Activated B cell treated with CpG ODN at 0.5 μM for 24 hours (primary cell): ENCODE measurements at regions of chr16 and their contacts with region 1.

Region 1: DNA sequence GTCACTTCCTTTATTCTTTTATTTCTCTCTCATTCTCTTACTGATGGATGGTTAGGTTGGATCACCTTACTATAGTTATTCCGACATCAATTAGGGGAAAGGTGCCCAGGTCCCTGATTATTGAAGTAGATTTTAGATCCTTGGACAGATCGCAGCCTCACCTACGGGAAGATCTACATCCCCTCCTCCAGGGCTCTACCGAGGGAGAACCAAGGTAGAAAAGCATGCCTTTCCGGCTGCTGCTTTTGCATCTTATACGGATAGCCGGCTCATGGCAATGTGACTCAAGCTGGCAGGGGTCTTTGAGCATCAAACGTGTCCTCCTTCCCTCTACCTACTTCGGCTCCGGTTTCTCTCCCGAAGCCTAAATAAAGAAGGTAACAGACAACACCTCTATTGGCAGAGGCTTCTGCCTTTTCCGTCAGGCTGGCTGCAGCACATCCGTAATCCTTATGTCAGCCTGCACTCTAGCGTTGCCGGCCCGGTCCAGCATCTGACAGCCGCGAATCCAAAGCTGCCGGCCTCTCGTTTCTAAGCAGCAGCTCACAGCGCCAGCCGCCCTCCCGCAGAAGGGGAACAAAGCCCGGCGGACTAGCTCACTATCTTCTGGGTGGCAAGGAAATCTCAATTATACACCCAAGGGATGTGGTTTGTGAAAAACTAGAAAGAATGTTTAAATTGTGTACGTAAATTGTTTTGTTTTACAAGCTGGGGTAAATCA is 46.9 kb downstream of the IRX6 start:
- DNase-seq: no peak
- ATAC-seq: no peak
- H3K4me3 Mint-ChIP-seq: no peak overlapping the region
- H3K27ac Mint-ChIP-seq: no peak overlapping the region
- H3K4me1 Mint-ChIP-seq: peaks cover 9% of the 10 kb centered on the region
- H3K27me3 Mint-ChIP-seq: peaks cover 25% of the 10 kb centered on the region
- CTCF ChIP-seq: no peak

Region 2: GRCh38 chr16:55035029-55035428 is 335.9 kb before region 1 on chr16:
- CTCF ChIA-PET with region 1: no interaction called
- POLR2A ChIA-PET with region 1: no interaction called
- intact Hi-C with region 1: loop called (anchors 2 kb)
- DNase-seq: no peak
- ATAC-seq: no peak
- H3K4me3 Mint-ChIP-seq: no peak overlapping the region
- H3K27ac Mint-ChIP-seq: no peak overlapping the region
- H3K4me1 Mint-ChIP-seq: no peaks in the 10 kb centered on the region
- H3K27me3 Mint-ChIP-seq: no peaks in the 10 kb centered on the region
- CTCF ChIP-seq: no peak

Region 3: DNA sequence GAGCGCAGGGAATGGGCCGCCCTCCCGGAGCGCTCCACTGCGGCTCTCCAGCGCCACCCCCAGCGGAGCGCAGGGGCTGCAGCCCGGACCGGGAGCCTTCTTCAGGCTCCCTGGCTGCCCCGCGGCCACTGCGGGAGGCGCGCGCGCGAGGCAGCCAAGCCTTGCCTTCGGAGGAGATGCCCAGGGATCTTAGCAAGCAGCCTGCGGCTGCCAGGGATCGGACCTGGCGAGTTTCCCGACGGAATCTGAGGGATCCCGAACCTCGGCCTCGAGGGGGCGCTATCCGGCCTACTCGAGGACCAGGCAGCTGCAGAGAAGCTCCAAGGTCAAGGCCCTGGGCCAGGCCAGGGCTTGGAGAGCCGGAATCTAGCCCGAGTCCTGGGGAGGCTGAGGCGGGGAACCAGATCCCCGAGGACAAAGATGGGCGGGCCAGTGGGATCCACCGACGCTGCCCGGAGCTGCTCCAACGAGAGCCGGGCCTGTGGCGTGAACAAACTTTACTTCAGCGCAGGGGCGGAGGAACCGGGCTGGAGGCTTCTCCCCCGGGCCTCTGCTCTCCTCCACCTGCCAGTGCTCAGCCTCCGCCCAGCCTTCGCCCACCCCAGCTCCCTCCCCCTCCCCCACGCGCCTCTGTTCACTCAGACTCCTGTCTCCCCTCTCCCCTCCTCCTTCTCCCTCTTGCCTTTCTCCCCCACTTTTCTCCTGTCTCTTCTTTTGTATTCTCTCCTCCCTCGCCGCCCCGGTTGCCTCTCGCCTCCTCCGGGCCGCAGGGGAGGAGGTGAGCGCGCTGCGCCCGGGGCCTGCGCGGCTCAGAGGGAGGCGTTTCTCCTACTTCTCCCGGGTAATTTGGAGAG is 47.1 kb before region 1 on chr16 and contains the start of gene IRX6:
- CTCF ChIA-PET with region 1: interaction called, 4 read pairs
- POLR2A ChIA-PET with region 1: no interaction called
- intact Hi-C with region 1: loop called (anchors 2 kb)
- DNase-seq: no peak
- ATAC-seq: no peak
- H3K4me3 Mint-ChIP-seq: peak within 1 kb of the TSS; percentile 28
- H3K27ac Mint-ChIP-seq: no peak within 1 kb of the TSS
- H3K4me1 Mint-ChIP-seq: peaks cover 14% of the 10 kb centered on the region
- H3K27me3 Mint-ChIP-seq: peaks cover 36% of the 10 kb centered on the region
- CTCF ChIP-seq: no peak
- total RNA-seq, gene IRX6: 0.18 TPM in 1 of 2 replicates, not detected in the other